CD4-positive, alpha-beta T cell (primary cell): ENCODE measurements at regions of chr12 and their contacts with region 1.

Region 1: GRCh38 chr12:68633614-68634529 is 23.2 kb downstream of the RAP1B start:
- DNase-seq: no peak
- ATAC-seq: no peak
- H3K4me3 ChIP-seq: no peak overlapping the region
- H3K4me3 Mint-ChIP-seq: peak overlapping the region; percentile 32
- H3K27ac ChIP-seq: peak overlapping the region in 1 of 2 donors; percentile 18
- H3K27ac Mint-ChIP-seq: peak overlapping the region; percentile 38
- H3K4me1 ChIP-seq: peaks cover 48% of the 10 kb centered on the region
- H3K4me1 Mint-ChIP-seq: peaks cover 94% of the 10 kb centered on the region
- H3K27me3 ChIP-seq: no peaks in the 10 kb centered on the region
- H3K27me3 Mint-ChIP-seq: no peaks in the 10 kb centered on the region
- CTCF ChIP-seq: no peak

Region 2: GRCh38 chr12:68572661-68573060 is 61.2 kb before region 1 on chr12:
- CTCF ChIA-PET with region 1: no interaction called
- POLR2A ChIA-PET with region 1: no interaction called
- intact Hi-C with region 1: no loop called
- DNase-seq: no peak
- ATAC-seq: no peak
- H3K4me3 ChIP-seq: no peak overlapping the region
- H3K4me3 Mint-ChIP-seq: no peak overlapping the region
- H3K27ac ChIP-seq: no peak overlapping the region
- H3K27ac Mint-ChIP-seq: no peak overlapping the region
- H3K4me1 ChIP-seq: peaks cover 2% of the 10 kb centered on the region
- H3K4me1 Mint-ChIP-seq: peaks cover 27% of the 10 kb centered on the region
- H3K27me3 ChIP-seq: no peaks in the 10 kb centered on the region
- H3K27me3 Mint-ChIP-seq: no peaks in the 10 kb centered on the region
- CTCF ChIP-seq: no peak

Region 3: DNA sequence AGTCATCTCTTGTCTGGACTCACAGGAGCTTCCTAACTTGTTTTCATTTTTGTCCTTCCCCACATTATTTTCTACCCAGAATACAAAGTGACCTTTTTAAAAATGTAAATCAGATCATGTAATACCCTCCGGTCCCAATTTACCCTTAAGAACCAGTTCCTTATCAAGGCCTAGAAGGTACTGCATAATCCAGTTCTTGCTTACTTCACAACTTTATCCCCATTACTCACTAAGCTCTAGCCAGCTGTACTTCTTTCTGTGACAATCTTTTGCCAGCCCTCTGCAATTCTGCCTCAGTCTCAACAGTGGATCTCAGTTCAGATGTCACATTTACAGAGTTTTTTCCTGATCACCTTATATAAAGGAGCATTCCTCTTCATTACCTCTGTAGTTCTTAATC is 11.6 kb before region 1 on chr12:
- CTCF ChIA-PET with region 1: interaction called, 7 read pairs
- POLR2A ChIA-PET with region 1: interaction called, 3 read pairs
- intact Hi-C with region 1: loop called in 1 of 2 experiments (anchors 2 kb)
- DNase-seq: no peak
- ATAC-seq: no peak
- H3K4me3 ChIP-seq: no peak overlapping the region
- H3K4me3 Mint-ChIP-seq: peak overlapping the region; percentile 49
- H3K27ac ChIP-seq: peak overlapping the region in 1 of 2 donors; percentile 1
- H3K27ac Mint-ChIP-seq: peak overlapping the region; percentile 37
- H3K4me1 ChIP-seq: peaks cover 57% of the 10 kb centered on the region
- H3K4me1 Mint-ChIP-seq: peaks cover 90% of the 10 kb centered on the region
- H3K27me3 ChIP-seq: no peaks in the 10 kb centered on the region
- H3K27me3 Mint-ChIP-seq: no peaks in the 10 kb centered on the region
- CTCF ChIP-seq: no peak